Naive thymus-derived CD4-positive, alpha-beta T cell (primary cell): ENCODE measurements at regions of chr12 and their contacts with region 1.

Region 1: DNA sequence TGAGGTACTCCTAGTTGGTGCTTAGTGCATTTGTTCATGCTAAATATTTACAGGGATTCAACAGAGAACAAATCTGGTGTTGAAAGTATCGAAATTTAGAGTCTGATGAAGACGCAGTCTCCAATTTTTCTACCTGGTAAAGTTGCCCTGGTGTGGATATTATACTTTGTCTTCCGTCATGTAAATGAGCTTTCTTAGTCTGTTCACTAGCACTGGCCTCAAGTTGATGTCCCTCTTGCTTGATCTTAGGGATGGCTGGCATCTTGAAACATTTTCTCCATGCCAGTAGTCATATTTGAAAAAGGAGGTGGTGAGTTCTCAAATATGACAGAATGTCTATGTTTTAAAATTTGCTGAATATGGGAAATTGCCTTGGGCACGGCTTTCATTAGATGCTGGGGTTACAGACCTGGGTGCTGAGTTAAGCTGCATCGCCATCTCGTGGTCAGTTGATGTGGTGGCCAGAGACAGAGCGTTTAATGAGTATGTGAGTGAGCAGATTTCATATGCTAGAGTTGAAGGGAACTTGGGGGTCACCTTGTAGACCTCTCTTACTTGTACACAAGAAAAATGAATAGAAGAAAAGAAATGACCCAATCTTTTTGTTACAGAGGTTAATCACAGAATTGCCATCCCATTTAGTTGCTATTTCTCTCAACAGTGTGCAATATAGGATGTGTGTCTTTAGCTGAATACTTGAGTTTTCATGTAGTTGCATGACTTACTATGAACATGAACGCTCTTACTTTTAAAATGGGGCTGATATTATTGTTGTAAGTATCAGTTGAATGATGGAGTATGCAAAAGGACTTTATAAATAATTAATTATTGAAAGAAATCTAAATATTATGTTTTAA is 172.8 kb upstream of the DCN start:
- DNase-seq: peak in 5 of 9 donors; percentile 17 to 38 (median 29)
- ATAC-seq: peak; percentile 87
- H3K4me3 ChIP-seq: no peak overlapping the region
- H3K4me3 Mint-ChIP-seq: no peak overlapping the region
- H3K27ac ChIP-seq: no peak overlapping the region
- H3K27ac Mint-ChIP-seq: no peak overlapping the region
- H3K4me1 ChIP-seq: no peaks in the 10 kb centered on the region
- H3K4me1 Mint-ChIP-seq: no peaks in the 10 kb centered on the region
- H3K27me3 ChIP-seq: no peaks in the 10 kb centered on the region
- H3K27me3 Mint-ChIP-seq: peaks cover 14 to 24% (median 16%) of the 10 kb centered on the region in 5 donors

Region 2: DNA sequence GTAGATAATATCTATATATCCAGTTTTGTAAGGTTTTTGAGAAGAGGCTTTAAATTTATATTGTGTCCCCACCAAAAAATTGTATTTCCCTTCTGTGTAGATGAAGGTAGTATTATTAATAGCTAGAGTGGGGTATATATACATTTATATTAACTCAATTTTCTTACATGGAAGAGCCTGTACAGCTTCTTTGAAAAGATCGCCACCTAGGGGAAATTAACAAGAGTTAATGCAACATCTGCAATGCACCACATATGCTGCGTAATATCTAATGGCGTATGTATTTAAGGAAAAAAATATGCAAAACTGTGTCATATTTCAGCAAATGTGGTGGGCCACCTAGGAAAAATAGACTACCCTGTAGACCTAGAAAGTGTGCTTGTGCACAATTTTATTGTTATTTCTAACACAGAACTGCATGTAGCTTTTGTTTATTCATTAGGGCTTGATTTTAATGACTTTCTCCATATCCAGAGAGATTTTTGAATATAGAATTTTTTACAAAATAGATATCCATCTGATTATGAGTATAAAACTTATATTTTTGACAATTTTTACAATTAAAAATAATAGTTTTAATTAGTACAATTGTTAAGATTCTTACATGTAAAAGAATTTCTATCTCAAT is 414.4 kb before region 1 on chr12:
- CTCF ChIA-PET with region 1: no interaction called
- POLR2A ChIA-PET with region 1: no interaction called
- intact Hi-C with region 1: loop called in 1 of 2 experiments (anchors 1 kb)
- DNase-seq: peak in 1 of 9 donors; percentile 14
- ATAC-seq: no peak
- H3K4me3 ChIP-seq: no peak overlapping the region
- H3K4me3 Mint-ChIP-seq: no peak overlapping the region
- H3K27ac ChIP-seq: no peak overlapping the region
- H3K27ac Mint-ChIP-seq: no peak overlapping the region
- H3K4me1 ChIP-seq: no peaks in the 10 kb centered on the region
- H3K4me1 Mint-ChIP-seq: peaks cover 0 to 2% (median 0%) of the 10 kb centered on the region in 7 donors
- H3K27me3 ChIP-seq: no peaks in the 10 kb centered on the region
- H3K27me3 Mint-ChIP-seq: peaks cover 5 to 13% (median 5%) of the 10 kb centered on the region in 5 donors

Region 3: GRCh38 chr12:91316907-91317269 is 38.5 kb before region 1 on chr12:
- CTCF ChIA-PET with region 1: no interaction called
- POLR2A ChIA-PET with region 1: no interaction called
- intact Hi-C with region 1: no loop called
- DNase-seq: no peak
- ATAC-seq: no peak
- H3K4me3 ChIP-seq: no peak overlapping the region
- H3K4me3 Mint-ChIP-seq: no peak overlapping the region
- H3K27ac ChIP-seq: no peak overlapping the region
- H3K27ac Mint-ChIP-seq: no peak overlapping the region
- H3K4me1 ChIP-seq: no peaks in the 10 kb centered on the region
- H3K4me1 Mint-ChIP-seq: no peaks in the 10 kb centered on the region
- H3K27me3 ChIP-seq: no peaks in the 10 kb centered on the region
- H3K27me3 Mint-ChIP-seq: peaks cover 0 to 33% (median 22%) of the 10 kb centered on the region in 5 donors